Calu3 (cell line): ENCODE measurements at regions of chr6 and their contacts with region 1.

Region 1: DNA sequence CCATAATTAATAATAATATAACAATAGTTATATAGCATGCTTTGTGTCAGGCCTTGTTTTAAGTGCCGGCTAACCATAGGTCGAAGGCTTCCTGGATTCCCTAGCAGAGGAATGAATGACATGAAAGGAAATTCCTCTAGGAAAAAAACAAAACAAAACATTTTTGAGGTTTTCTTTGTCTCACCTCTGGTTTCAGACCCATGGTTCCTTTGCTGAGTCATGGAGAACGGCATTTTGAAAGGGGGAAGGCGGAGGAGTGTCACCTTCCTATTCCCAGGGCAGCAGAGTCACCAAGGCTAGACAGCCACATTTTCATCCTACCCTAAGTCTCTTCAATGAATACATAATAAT is 25.3 kb upstream of the CCND3 start:
- DNase-seq: peak; percentile 50
- H3K4me3 Mint-ChIP-seq: peak overlapping the region; percentile 44
- H3K27ac Mint-ChIP-seq: peak overlapping the region; percentile 87
- H3K4me1 Mint-ChIP-seq: peaks cover 30% of the 10 kb centered on the region
- H3K27me3 Mint-ChIP-seq: no peaks in the 10 kb centered on the region
- CTCF ChIP-seq: no peak

Region 2: DNA sequence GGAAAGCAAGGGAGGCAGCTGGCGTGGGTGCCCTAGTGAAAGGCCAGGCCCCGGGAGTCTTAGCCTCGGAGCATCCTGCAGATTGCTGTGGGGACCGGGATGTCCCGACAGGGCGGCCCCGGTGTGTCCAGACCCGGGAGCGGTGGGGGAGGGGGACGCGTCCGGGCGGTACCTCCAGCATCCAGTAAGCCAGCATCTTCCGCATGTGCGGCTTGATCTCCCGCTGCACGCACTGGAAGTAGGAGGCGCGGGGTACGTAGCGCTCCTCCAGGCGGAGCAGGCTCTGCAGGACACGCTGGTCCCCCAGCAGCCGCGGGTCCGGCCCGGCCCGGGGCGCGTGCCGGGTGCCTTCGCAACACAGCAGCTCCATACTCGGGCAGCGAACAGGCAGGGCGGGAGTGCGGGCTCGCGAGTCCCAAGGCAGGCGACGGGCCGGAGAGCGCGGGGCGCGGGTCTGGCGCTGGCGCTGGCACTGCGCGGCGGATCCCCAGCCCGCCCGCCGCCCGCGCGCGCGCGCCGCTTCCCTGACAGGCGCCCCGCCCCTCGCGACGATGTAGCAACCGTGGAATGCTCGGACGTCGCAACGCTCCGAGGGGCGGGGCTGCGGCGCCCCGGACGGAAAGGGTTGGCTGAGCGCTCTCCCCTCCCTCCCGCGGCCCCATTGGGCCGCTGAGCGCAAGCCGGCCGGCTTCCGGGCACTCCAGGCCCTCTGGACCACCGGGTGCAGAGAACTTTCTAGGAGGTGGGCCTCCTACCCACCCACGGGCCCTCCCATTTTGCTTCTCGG is 25.5 kb before region 1 on chr6 and contains the start of gene CCND3:
- CTCF ChIA-PET with region 1: interaction called, 4 read pairs
- intact Hi-C with region 1: loop called (anchors 2 kb)
- DNase-seq: peak; percentile 96
- H3K4me3 Mint-ChIP-seq: peak within 1 kb of the TSS; percentile 100
- H3K27ac Mint-ChIP-seq: peak within 1 kb of the TSS; percentile 93
- H3K4me1 Mint-ChIP-seq: peaks cover 26% of the 10 kb centered on the region
- H3K27me3 Mint-ChIP-seq: no peaks in the 10 kb centered on the region
- CTCF ChIP-seq: no peak
- total RNA-seq, gene CCND3: 77.4 and 90.4 TPM in 2 replicates

Region 3: DNA sequence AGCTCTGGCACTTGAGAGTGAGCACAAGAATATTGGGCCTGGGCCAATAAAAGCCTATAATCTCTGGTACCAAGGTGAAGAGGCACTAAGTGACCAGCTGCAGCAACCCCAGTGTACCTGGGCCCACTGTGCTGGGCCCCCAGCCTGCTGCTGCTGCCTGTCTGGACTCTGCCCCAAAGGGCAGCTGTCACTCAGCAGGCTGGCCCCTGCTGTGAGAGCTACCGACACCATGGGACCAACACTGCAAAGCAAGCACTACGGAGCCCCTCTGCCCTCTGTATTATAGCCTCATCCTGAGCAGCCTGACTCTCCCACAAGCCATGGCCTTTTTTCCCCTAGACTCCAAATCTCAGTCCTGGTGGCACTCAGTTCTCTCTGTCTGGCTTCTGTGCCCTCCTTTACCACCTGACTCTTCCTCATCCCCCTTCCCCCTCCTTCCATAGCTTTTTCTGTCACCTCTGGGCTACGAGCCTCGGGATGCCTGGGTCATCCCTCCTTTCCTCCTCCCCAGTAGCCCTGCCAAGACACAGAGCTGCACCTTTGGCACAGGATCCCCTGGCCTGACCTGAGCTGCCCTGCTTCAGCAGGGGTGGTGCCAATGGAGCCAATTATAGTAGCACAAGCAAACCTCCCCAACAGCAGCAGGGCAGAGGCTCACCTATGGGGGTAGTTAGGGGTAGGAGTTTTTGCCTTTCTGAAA is 1068.7 kb after region 1 on chr6:
- CTCF ChIA-PET with region 1: no interaction called
- intact Hi-C with region 1: no loop called
- DNase-seq: no peak
- H3K4me3 Mint-ChIP-seq: no peak overlapping the region
- H3K27ac Mint-ChIP-seq: no peak overlapping the region
- H3K4me1 Mint-ChIP-seq: no peaks in the 10 kb centered on the region
- H3K27me3 Mint-ChIP-seq: no peaks in the 10 kb centered on the region
- CTCF ChIP-seq: no peak